Breast epithelium (tissue), 4 donors: ENCODE measurements at regions of chr10 and their contacts with region 1.

Region 1: DNA sequence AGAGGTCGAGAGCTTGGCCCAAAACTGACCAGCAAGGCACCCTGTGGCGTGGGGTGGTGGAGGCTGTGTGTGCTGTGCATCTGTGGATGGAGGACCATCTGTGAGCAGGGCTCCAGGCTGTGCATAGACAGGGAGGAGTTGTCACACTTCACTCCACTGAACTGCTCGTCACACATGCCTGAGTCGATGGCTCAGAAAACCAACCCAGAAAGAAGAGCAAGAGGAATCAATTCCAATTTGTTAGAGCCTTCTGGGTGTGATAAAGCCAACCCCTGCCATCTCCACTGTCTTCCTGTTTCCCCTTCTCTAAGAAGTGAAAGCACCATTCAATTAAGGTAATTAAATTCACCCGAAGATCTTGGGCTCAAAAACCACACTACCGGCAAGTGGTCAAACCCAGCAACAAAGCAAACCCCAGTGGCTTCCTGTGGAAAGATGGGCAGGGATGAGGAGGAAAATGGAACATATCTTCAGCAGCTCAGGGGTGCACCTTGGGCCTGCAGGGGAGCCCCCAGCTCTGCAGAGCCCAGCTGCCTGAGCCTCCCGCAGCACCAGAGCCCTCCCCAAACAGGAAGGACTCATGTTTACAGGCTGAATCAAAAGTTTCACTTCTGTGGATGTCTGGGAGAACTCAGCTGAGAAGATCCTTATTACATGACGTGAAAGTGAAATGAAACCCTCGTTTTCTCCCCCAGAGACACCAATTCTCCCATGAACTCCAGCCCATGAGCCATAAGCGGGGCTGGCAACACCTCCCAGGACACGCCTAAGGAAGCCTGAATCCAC is 10.8 kb downstream of the C10orf71 start:
- DNase-seq: no peak
- H3K4me3 ChIP-seq: no peak overlapping the region
- H3K27ac ChIP-seq: no peak overlapping the region
- H3K4me1 ChIP-seq: no peaks in the 10 kb centered on the region
- H3K27me3 ChIP-seq: no peaks in the 10 kb centered on the region
- CTCF ChIP-seq: no peak
- POLR2A ChIP-seq: no peak

Region 2: GRCh38 chr10:49362596-49363260 is 52.9 kb after region 1 on chr10:
- intact Hi-C with region 1: no loop called
- DNase-seq: no peak
- H3K4me3 ChIP-seq: no peak overlapping the region
- H3K27ac ChIP-seq: no peak overlapping the region
- H3K4me1 ChIP-seq: no peaks in the 10 kb centered on the region
- H3K27me3 ChIP-seq: peaks cover 0 to 4% of the 10 kb centered on the region in 2 donors
- CTCF ChIP-seq: no peak
- POLR2A ChIP-seq: no peak

Region 3: GRCh38 chr10:50582766-50583762 is 1273.2 kb after region 1 on chr10:
- intact Hi-C with region 1: loop called (anchors 5 kb)
- DNase-seq: no peak
- H3K4me3 ChIP-seq: no peak overlapping the region
- H3K27ac ChIP-seq: no peak overlapping the region
- H3K4me1 ChIP-seq: peaks cover 0 to 8% of the 10 kb centered on the region in 2 donors
- H3K27me3 ChIP-seq: no peaks in the 10 kb centered on the region
- CTCF ChIP-seq: no peak
- POLR2A ChIP-seq: no peak

Region 4: DNA sequence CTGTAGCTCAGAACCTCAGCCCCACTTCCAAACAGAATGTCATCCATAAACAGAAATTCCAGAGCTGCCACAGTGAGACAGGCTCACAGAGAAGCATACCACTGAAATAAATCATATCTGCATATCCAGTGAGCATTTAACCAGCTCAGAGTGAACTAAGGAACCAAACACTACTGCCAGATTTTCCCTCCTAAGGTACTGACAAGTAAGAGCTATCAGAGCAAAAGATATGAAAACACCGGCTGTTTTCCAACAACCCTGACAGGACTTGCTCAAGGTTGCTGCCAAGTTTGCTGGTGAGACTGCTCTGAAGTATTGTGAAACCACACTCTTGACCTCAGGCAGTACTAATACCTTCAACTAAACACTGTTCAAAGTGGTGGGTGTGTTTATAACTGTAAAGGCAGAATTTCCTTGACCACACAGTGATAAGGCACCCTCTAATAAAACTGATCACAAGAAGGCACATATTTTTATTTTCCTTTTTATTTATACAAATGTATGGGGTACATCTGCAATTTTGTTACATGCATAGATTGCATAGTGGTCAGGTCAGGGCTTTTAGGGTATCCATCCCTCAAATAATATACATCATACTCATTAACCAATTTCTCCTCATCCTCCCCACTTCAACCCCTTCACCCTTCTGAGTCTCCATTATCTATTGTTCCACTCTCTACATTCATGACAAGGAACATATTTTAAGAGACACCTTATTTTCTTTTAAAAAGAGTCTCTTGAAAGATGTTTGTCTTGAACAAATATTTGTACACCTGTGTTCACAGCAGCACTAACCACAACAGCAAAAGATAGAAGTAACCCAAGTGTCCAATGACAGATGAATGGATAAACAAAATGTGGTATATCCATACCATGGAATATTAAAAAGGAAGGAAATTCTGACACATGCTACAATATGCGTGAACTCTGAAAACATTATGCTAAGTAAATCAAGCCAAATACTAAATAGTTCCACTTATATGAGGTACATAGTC is 1295.7 kb after region 1 on chr10:
- intact Hi-C with region 1: no loop called
- DNase-seq: peak in 1 of 2 donors; percentile 66
- H3K4me3 ChIP-seq: peak overlapping the region in 1 of 3 donors; percentile 1
- H3K27ac ChIP-seq: peak overlapping the region; percentile 27 to 61
- H3K4me1 ChIP-seq: peaks cover 0 to 26% of the 10 kb centered on the region in 2 donors
- H3K27me3 ChIP-seq: no peaks in the 10 kb centered on the region
- CTCF ChIP-seq: no peak
- POLR2A ChIP-seq: no peak